GM10248 (cell line): ENCODE measurements at regions of chr2 and their contacts with region 1.

Region 1: DNA sequence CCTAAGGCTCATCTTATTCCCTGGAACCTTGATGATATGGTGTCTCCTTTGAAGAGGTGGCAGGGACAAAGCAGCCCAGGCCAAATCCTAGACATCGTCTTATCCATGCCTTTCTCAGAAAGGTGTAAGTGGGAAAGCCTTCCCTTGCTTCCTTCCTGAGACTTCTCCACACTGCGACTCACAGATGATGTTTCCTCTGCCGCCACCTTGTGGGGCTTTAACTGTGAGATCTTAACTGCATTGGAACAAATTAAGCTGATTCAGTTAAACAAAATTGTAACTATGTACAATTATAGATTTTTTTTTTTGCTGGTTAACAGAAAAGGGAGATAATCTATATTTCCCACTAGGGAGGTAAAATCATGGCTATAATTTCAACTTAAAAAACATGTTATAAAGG is 10.0 kb upstream of the GCA start:
- DNase-seq: no peak
- CTCF ChIP-seq: peak; percentile 63

Region 2: GRCh38 chr2:162318328-162319180 is 15.4 kb before region 1 on chr2 and contains the start of gene IFIH1:
- CTCF ChIA-PET with region 1: interaction called, 28 read pairs
- POLR2A ChIA-PET with region 1: no interaction called
- DNase-seq: peak; percentile 85
- CTCF ChIP-seq: peak; percentile 41

Region 3: DNA sequence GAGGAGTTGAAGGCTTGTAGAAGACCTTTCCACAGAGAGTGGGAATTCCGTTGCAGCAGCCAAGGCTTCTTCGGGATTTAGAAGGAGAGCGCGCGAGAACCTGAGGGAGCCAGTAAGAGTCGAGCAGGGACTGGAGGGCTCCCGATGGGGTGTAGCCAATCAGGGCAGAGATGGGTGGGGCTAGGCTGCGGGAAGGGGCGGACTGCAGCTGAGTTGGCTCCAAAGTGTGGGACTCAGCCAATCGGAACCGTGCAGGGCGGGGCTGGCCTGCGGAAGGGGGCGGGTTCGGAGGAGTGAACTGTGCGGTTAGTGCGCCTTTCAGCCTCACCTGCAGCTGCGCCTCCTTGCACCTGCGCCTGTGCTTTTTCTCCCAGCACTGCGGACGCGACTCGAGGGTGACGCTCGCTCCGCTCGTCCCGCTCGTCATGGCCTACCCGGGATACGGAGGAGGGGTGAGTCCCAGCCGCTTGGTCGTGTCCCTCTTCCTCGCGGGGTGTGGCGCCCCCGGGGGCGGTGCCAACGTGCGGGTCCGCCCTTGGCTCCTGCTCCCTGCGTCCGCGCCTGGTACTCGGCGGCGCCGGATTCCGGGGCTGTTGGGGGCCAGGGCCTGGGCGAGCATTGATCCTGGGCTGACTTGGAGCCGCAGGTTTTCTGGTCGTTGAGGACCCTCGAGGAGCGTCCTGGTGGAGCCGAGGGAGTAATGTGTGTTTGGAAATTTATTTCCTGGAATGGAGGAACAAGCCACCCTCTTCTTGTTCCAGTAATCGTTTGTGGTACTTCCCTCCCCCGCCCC is 10.1 kb after region 1 on chr2 and contains the start of gene GCA:
- CTCF ChIA-PET with region 1: interaction called, 13 read pairs
- POLR2A ChIA-PET with region 1: no interaction called
- DNase-seq: peak; percentile 95
- CTCF ChIP-seq: no peak